Activated CD4-positive, alpha-beta T cell treated with anti-CD3 and anti-CD28 coated beads for 36 hours (primary cell): ENCODE measurements at regions of chr12 and their contacts with region 1.

Region 1: DNA sequence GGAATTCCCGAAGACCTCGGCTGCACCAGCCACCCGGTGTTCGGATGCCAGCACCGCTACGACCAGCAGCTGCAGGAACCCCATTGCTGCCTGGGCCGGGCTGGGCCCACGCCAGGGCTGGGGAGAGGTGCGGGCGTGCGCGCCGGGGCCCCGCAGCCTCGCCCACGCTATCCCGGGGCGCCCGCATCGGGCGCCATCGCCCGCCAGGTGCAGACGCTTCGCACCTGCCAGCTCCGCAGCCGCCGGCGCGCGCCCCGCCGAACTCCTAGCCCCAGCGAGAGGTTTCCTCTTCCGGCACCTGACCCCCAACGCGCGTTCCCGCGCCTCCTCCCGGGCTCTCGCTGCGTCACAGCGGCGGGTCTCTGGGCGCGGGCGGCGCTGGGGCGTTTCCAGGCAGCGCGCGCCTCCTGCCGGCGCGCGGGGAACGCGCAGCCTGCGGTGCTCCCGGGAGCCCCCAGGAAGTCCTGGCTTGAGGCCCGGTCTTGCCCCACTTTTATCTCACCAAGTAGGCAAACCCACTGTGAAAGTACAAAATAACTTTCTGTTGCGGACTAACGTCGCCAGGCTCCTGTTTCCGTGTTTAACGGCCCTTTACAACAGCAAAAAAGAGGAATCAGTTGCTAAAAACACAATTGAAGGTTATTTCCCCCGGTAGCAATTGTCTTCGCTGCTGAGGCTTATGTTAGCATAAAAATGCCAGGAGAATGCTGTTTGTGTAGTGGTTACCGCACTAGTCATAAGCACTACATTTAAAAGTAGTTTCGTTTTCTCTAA is at the start of gene TM7SF3:
- DNase-seq: peak; percentile 97
- ATAC-seq: peak; percentile 83
- H3K4me3 Mint-ChIP-seq: peak within 1 kb of the TSS; percentile 86
- H3K27ac Mint-ChIP-seq: peak within 1 kb of the TSS; percentile 82
- H3K4me1 Mint-ChIP-seq: peaks cover 45% of the 10 kb centered on the region
- H3K27me3 Mint-ChIP-seq: no peaks in the 10 kb centered on the region
- total RNA-seq, gene TM7SF3: 29.4 to 34.0 TPM

Region 2: GRCh38 chr12:25295361-25295760 is 1718.9 kb before region 1 on chr12:
- CTCF ChIA-PET with region 1: no interaction called
- POLR2A ChIA-PET with region 1: no interaction called
- intact Hi-C with region 1: no loop called
- DNase-seq: no peak
- ATAC-seq: no peak
- H3K4me3 Mint-ChIP-seq: no peak overlapping the region
- H3K27ac Mint-ChIP-seq: no peak overlapping the region
- H3K4me1 Mint-ChIP-seq: peaks cover 9% of the 10 kb centered on the region
- H3K27me3 Mint-ChIP-seq: peaks cover 2% of the 10 kb centered on the region

Region 3: GRCh38 chr12:26832822-26833742 is 181.2 kb before region 1 on chr12 and contains the start of gene ITPR2:
- CTCF ChIA-PET with region 1: interaction called, 5 read pairs
- POLR2A ChIA-PET with region 1: no interaction called
- intact Hi-C with region 1: loop called (anchors 1 kb)
- DNase-seq: peak; percentile 97
- ATAC-seq: peak; percentile 91
- H3K4me3 Mint-ChIP-seq: peak within 1 kb of the TSS; percentile 96
- H3K27ac Mint-ChIP-seq: peak within 1 kb of the TSS; percentile 99
- H3K4me1 Mint-ChIP-seq: peaks cover 37% of the 10 kb centered on the region
- H3K27me3 Mint-ChIP-seq: no peaks in the 10 kb centered on the region
- total RNA-seq, gene ITPR2: 27.3 to 28.6 TPM

Region 4: GRCh38 chr12:26937875-26938700 is 76.2 kb before region 1 on chr12 and contains the starts of genes FGFR1OP2 and INTS13:
- CTCF ChIA-PET with region 1: interaction called, 13 read pairs
- POLR2A ChIA-PET with region 1: no interaction called
- intact Hi-C with region 1: loop called (anchors 1 kb)
- DNase-seq: peak; percentile 99
- ATAC-seq: peak; percentile 92
- H3K4me3 Mint-ChIP-seq: peak within 1 kb of the TSS; percentile 98
- H3K27ac Mint-ChIP-seq: peak within 1 kb of the TSS; percentile 99
- H3K4me1 Mint-ChIP-seq: peaks cover 56% of the 10 kb centered on the region
- H3K27me3 Mint-ChIP-seq: no peaks in the 10 kb centered on the region
- total RNA-seq, gene FGFR1OP2: 38.5 to 43.1 TPM
- total RNA-seq, gene INTS13: 66.3 to 71.5 TPM

Region 5: DNA sequence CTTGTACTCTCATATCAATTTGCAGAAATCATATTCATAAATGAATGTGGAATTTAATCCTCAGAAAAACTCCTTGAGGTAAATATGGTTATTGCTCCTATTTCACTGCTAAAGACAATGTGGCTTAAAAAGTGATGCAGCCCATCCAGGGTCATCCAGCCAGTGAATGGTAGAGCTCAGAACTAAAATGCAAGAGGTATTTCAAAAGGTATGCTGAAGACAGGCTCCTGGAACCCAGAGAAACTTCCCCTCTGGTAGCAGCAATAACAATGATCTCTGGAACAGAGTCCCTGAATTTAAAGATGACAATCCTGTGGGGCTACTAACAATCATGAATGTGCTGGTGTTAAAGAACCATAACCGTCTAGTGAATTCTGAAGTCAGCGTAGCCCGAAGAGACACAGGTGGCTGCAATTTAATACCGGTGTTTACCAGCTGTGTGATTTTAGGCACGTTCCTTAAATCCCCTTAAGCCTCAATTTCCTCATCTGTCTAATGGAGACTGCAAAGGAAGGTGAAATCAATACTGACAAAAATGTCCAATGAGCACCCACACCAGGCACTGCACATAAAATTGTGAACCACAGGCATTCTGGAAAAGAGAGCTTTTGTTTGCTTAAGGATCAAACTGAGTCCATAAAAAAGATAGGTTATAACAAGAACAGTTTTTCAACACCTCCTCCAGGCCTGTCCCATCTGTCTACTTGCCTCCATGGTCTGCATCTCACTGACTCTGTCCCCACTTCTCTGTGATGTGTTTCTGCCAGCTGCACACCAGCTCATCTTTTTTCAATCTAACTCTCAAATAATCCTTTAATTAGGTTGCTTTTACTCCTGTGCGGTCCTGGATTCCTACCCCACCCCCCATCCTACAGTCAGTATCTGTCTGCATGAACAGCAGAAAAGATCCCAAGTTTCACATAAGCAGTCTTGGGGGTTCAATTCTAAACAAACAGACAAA is 10.6 kb before region 1 on chr12:
- CTCF ChIA-PET with region 1: interaction called, 17 read pairs
- POLR2A ChIA-PET with region 1: interaction called, 5 read pairs
- intact Hi-C with region 1: no loop called
- DNase-seq: no peak
- ATAC-seq: no peak
- H3K4me3 Mint-ChIP-seq: no peak overlapping the region
- H3K27ac Mint-ChIP-seq: no peak overlapping the region
- H3K4me1 Mint-ChIP-seq: peaks cover 22% of the 10 kb centered on the region
- H3K27me3 Mint-ChIP-seq: no peaks in the 10 kb centered on the region

Region 6: DNA sequence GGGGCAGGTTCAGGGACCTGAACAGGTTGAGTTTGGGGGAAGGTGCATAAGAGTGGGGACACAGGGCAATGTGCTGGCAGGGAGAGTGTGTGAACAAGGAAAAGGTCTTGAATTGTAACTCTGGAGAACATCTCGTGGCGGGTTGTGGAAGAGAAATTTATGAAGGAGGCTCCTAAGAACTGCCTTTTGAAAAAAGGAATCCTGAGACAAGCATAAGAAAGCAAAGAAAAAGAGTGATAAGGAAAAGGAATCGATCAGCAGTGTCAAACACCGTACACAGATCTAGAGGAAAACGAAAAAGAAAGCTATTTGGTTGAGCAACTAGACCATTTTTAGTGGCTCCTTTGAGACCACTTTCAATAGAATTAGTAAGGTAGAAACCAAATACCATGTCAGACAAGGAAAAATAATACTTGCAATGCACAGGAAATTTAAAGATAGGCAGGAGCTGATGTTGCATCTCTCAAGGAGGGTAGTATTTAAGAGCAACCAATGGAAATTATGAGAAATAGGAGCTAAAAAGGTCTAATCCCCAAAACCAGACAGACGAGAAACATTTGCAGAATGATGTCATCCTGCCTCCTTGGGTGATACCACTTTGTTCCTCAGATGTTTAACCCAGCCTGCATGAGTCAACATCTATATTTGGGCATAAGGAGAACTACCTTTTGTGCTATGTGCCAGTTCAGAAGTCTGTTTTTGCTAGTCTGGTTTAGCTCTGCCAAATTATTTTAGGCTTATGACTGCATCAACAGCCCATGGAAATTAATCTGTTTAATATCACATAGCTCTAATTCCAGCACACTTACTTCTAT is 165.3 kb after region 1 on chr12:
- CTCF ChIA-PET with region 1: interaction called, 3 read pairs
- POLR2A ChIA-PET with region 1: no interaction called
- intact Hi-C with region 1: loop called in 1 of 2 experiments (anchors 1 kb)
- DNase-seq: peak; percentile 58
- ATAC-seq: peak; percentile 95
- H3K4me3 Mint-ChIP-seq: peak overlapping the region; percentile 7
- H3K27ac Mint-ChIP-seq: peak overlapping the region; percentile 90
- H3K4me1 Mint-ChIP-seq: peaks cover 41% of the 10 kb centered on the region
- H3K27me3 Mint-ChIP-seq: no peaks in the 10 kb centered on the region

Region 7: DNA sequence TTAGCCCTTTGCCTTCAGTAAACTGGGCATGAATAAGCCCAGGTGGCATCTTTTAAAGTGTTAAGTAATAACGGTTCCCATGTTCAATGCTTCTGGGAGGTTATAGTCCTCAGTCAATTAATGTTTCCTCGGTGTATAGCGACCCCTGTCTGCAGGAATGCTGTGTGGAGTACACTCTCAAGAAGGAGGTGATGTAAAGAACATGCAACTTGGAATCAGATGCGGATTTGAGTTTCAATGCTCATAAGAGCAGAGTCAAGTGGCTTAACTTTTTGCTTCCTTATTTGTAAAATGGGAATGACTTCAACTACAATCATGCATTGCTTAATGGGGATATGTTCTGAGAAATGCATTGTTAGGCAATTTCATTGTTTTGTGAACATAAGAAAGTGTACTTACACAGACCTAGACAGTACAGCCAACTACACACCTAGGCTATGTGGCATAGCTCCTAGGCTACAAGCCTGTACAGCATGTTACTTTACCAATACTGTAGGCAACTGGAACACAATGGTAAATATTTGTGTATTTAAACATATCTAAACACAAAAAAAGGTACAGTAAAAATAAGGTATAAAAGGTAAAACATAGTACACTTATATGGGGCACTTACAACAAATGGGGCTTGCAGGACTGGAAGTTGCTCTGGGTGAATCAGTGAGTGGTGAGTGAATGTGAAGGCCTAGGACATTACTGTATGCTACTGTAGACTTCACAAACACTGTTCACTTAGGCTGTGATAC is 689.6 kb after region 1 on chr12:
- CTCF ChIA-PET with region 1: no interaction called
- POLR2A ChIA-PET with region 1: no interaction called
- intact Hi-C with region 1: loop called in 1 of 2 experiments (anchors 10 kb)
- DNase-seq: peak; percentile 87
- ATAC-seq: peak; percentile 98
- H3K4me3 Mint-ChIP-seq: no peak overlapping the region
- H3K27ac Mint-ChIP-seq: no peak overlapping the region
- H3K4me1 Mint-ChIP-seq: no peaks in the 10 kb centered on the region
- H3K27me3 Mint-ChIP-seq: peaks cover 6% of the 10 kb centered on the region